PC-9 (cell line): ENCODE measurements at regions of chr7 and their contacts with region 1.

Region 1: GRCh38 chr7:27605689-27606269 is 56.9 kb downstream of the HIBADH start:
- DNase-seq: no peak
- H3K4me3 ChIP-seq: no peak overlapping the region
- H3K27ac ChIP-seq: peak overlapping the region; percentile 13
- H3K4me1 ChIP-seq: peaks cover 28% of the 10 kb centered on the region
- H3K27me3 ChIP-seq: no peaks in the 10 kb centered on the region
- CTCF ChIP-seq: peak; percentile 76

Region 2: DNA sequence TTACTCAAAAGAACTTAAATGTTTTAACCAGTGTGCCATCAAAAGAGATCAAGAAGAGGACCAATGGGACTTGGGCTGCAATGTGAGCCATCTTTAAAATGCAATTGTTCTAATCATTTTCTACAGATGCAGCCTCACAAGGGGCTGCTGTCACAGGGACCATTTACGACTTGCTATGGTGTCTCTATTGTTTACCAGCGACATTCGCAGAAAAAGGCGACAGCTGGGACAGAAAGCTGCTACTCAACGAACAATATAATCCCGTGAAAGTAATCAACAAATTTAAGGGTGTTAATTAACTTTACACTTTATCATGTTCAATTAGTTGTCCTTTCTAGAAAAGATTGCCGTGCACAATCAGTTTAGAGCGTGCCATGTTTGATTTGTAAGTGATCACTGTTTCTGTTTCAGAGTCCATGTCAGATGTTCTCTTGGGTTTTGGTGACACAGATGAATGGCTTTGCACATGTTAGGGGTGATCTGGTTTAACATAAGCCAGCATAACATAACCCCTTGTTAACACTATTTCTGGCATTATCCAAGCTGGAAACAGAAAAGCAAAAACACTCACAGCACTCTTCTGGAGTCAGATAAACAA is 53.9 kb before region 1 on chr7:
- CTCF ChIA-PET with region 1: interaction called, 13 read pairs
- POLR2A ChIA-PET with region 1: no interaction called
- intact Hi-C with region 1: no loop called
- DNase-seq: no peak
- H3K4me3 ChIP-seq: no peak overlapping the region
- H3K27ac ChIP-seq: no peak overlapping the region
- H3K4me1 ChIP-seq: no peaks in the 10 kb centered on the region
- H3K27me3 ChIP-seq: no peaks in the 10 kb centered on the region
- CTCF ChIP-seq: no peak

Region 3: GRCh38 chr7:27586825-27587224 is 19.0 kb before region 1 on chr7:
- CTCF ChIA-PET with region 1: interaction called, 22 read pairs
- POLR2A ChIA-PET with region 1: no interaction called
- intact Hi-C with region 1: no loop called
- DNase-seq: no peak
- H3K4me3 ChIP-seq: no peak overlapping the region
- H3K27ac ChIP-seq: no peak overlapping the region
- H3K4me1 ChIP-seq: no peaks in the 10 kb centered on the region
- H3K27me3 ChIP-seq: no peaks in the 10 kb centered on the region
- CTCF ChIP-seq: no peak

Region 4: GRCh38 chr7:27640914-27641580 is 35.3 kb after region 1 on chr7:
- CTCF ChIA-PET with region 1: interaction called, 17 read pairs
- POLR2A ChIA-PET with region 1: no interaction called
- intact Hi-C with region 1: loop called (anchors 2 kb)
- DNase-seq: peak; percentile 87 to 96
- H3K4me3 ChIP-seq: peak overlapping the region; percentile 8; the same call in 1 of the 2 replicates
- H3K27ac ChIP-seq: peak overlapping the region; percentile 90
- H3K4me1 ChIP-seq: peaks cover 37% of the 10 kb centered on the region
- H3K27me3 ChIP-seq: no peaks in the 10 kb centered on the region
- CTCF ChIP-seq: peak; percentile 40; the same call in 1 of the 2 replicates